CD8-positive, alpha-beta T cell (primary cell): ENCODE measurements at regions of chr2 and their contacts with region 1.

Region 1: DNA sequence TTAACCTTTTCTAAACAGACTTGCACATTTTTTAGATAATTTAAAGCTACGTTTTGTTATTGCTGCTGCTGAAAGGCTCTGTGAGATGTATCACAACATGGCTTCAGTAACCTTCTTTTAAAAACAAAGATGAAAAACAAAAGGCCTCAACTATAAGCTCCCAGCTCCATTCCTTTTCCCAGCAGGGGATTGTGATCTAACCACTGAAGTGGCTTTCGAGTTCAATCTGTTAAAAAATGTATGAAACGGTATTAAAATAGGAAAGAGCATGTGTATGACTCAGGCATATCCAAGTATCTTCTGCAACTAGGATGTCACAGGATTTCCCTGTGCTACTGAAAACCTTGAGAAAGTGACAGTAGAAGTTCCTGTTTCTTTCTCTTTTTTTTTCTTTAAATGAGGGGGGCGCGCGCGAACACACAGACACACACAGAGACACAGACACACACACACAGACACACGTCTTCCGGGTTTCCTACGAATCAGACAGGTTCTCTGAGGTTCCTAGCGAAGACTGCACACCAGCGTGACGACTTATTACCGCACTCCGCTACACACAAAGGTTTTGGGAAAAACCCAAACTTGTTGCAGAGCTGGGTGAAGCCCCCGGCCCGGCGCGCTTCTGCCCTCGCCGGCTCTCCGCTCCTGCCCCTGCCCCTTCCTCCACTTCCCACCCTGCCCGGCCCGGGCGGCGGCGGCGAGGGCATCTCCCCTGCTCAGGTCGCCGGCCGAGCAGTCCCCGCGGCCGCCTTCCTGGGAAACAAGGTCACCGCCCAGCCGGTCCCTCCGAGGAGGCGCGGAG is 86.8 kb downstream of the RBMS1 start:
- DNase-seq: peak; percentile 56 to 97 (median 74)
- ATAC-seq: peak; percentile 84
- H3K4me3 ChIP-seq: peak overlapping the region; percentile 52 to 70
- H3K4me3 Mint-ChIP-seq: peak overlapping the region; percentile 93
- H3K27ac ChIP-seq: peak overlapping the region; percentile 73
- H3K27ac Mint-ChIP-seq: peak overlapping the region; percentile 98
- H3K4me1 ChIP-seq: peaks cover 73% of the 10 kb centered on the region
- H3K4me1 Mint-ChIP-seq: peaks cover 82% of the 10 kb centered on the region
- H3K27me3 ChIP-seq: no peaks in the 10 kb centered on the region
- H3K27me3 Mint-ChIP-seq: no peaks in the 10 kb centered on the region
- CTCF ChIP-seq: no peak

Region 2: DNA sequence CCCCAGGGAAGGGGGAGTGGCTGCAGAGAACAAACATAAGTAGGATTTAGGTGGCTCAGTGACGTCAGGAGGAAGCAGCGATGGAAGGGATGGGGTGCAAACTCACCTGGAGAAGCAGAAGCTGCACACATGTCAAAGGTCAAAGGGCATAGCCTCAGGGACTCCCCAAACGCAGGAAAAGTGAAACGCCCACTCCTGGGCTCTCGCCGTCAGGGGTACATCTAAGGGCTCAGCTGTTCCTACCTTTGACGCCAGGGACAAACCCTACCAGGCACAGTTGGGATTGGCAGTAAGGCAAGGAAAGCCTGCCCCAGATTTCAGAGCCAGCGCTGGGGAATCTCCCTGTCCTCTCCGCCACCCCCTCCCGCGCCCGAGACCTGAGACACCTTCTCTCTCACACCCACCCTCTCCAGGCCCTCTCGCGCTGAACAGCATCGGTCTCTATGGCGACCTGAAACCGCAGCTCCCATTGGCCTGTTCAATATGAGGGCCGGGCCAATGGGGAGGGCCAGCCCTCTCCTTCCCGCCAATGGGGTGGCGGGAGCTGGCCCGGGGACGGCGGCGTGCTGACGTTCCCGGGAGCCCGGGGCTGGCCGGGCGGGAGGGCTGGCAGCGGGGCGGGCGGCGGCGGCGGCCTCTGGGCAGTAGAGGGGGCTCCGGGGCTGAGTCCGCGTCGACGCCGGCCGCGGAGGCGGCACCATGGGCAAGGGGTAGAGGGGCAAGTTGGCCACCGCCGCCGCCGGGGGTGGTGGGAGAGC is 1950.3 kb before region 1 on chr2 and contains the starts of genes CCDC148 and PKP4:
- CTCF ChIA-PET with region 1: no interaction called
- POLR2A ChIA-PET with region 1: no interaction called
- intact Hi-C with region 1: loop called in 1 of 2 experiments (anchors 5 kb)
- DNase-seq: peak; percentile 74 to 97 (median 86)
- ATAC-seq: peak; percentile 91
- H3K4me3 ChIP-seq: peak within 1 kb of the TSS; percentile 69 to 81
- H3K4me3 Mint-ChIP-seq: peak within 1 kb of the TSS; percentile 96
- H3K27ac ChIP-seq: peak within 1 kb of the TSS; percentile 23 to 49
- H3K27ac Mint-ChIP-seq: peak within 1 kb of the TSS; percentile 76
- H3K4me1 ChIP-seq: peaks cover 12% of the 10 kb centered on the region
- H3K4me1 Mint-ChIP-seq: peaks cover 16% of the 10 kb centered on the region
- H3K27me3 ChIP-seq: no peaks in the 10 kb centered on the region
- H3K27me3 Mint-ChIP-seq: peaks cover 13% of the 10 kb centered on the region
- CTCF ChIP-seq: no peak
- total RNA-seq, gene CCDC148: not detected
- total RNA-seq, gene PKP4: 5.7 to 8.1 TPM

Region 3: DNA sequence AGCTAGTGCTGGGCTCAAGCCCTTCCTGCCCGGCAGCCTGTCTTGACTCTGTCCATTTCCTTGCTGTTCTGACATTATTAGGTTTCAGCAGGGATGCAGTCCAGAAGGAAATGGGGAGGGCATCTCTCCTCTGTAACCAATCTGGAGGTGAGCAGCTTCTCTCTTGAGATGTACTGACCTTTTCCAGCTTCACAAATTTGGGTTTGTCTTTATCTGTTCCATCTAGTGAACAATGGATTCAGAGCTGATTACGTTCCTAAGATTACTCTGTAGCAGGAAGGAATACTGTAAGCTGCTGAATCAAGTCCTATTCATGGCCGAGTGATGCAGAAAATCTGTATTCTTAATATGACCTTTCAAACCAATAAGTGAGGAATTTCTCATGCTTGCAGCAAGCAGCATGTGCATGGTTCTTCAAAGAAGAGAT is 355.4 kb before region 1 on chr2:
- CTCF ChIA-PET with region 1: no interaction called
- POLR2A ChIA-PET with region 1: no interaction called
- intact Hi-C with region 1: no loop called
- DNase-seq: no peak
- ATAC-seq: no peak
- H3K4me3 ChIP-seq: no peak overlapping the region
- H3K4me3 Mint-ChIP-seq: no peak overlapping the region
- H3K27ac ChIP-seq: no peak overlapping the region
- H3K27ac Mint-ChIP-seq: no peak overlapping the region
- H3K4me1 ChIP-seq: no peaks in the 10 kb centered on the region
- H3K4me1 Mint-ChIP-seq: no peaks in the 10 kb centered on the region
- H3K27me3 ChIP-seq: no peaks in the 10 kb centered on the region
- H3K27me3 Mint-ChIP-seq: peaks cover 5% of the 10 kb centered on the region
- CTCF ChIP-seq: no peak

Region 4: GRCh38 chr2:160332318-160332717 is 74.5 kb before region 1 on chr2:
- CTCF ChIA-PET with region 1: no interaction called
- POLR2A ChIA-PET with region 1: no interaction called
- intact Hi-C with region 1: loop called in 1 of 2 experiments (anchors 5 kb)
- DNase-seq: peak in 3 of 9 experiments; percentile 13 to 55 (median 31)
- ATAC-seq: peak; percentile 42
- H3K4me3 ChIP-seq: no peak overlapping the region
- H3K4me3 Mint-ChIP-seq: peak overlapping the region; percentile 7
- H3K27ac ChIP-seq: no peak overlapping the region
- H3K27ac Mint-ChIP-seq: peak overlapping the region; percentile 77
- H3K4me1 ChIP-seq: peaks cover 74% of the 10 kb centered on the region
- H3K4me1 Mint-ChIP-seq: peaks cover 91% of the 10 kb centered on the region
- H3K27me3 ChIP-seq: no peaks in the 10 kb centered on the region
- H3K27me3 Mint-ChIP-seq: no peaks in the 10 kb centered on the region
- CTCF ChIP-seq: no peak

Region 5: DNA sequence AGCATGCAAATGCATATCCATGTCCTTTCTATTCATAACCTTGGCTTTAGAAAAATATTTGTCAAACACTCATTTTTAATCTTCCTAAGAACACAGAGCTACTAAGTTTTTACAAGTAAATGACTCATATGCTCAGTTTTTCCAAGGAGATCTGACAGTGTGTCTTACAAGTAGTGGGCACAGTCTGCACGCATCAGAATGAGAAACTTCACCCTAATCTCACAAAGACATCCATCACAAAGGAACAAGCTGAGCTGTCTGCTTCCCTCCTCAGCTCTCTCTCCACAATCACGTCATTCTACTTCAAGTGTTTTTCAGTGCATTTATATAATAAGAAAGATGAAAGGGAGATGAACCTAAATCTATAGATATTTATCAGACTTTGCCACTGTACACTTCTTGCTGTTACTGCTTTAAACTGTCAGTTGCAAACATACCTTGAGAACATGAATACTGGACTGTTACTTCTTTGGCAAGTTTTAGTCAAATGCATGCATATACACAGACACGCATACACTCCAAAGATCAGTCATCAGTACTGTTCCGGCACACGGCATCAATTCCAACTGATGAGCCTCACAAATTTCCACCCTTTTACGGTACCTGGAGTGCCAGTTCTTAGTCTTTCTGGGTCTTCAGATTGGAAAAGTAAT is 11.1 kb after region 1 on chr2:
- CTCF ChIA-PET with region 1: no interaction called
- POLR2A ChIA-PET with region 1: interaction called, 4 read pairs
- intact Hi-C with region 1: loop called (anchors 1 to 2 kb)
- DNase-seq: peak in 4 of 9 experiments; percentile 15 to 58 (median 36)
- ATAC-seq: peak; percentile 85
- H3K4me3 ChIP-seq: no peak overlapping the region
- H3K4me3 Mint-ChIP-seq: no peak overlapping the region
- H3K27ac ChIP-seq: no peak overlapping the region
- H3K27ac Mint-ChIP-seq: peak overlapping the region; percentile 24
- H3K4me1 ChIP-seq: peaks cover 26% of the 10 kb centered on the region
- H3K4me1 Mint-ChIP-seq: peaks cover 64% of the 10 kb centered on the region
- H3K27me3 ChIP-seq: no peaks in the 10 kb centered on the region
- H3K27me3 Mint-ChIP-seq: no peaks in the 10 kb centered on the region
- CTCF ChIP-seq: no peak

Region 6: DNA sequence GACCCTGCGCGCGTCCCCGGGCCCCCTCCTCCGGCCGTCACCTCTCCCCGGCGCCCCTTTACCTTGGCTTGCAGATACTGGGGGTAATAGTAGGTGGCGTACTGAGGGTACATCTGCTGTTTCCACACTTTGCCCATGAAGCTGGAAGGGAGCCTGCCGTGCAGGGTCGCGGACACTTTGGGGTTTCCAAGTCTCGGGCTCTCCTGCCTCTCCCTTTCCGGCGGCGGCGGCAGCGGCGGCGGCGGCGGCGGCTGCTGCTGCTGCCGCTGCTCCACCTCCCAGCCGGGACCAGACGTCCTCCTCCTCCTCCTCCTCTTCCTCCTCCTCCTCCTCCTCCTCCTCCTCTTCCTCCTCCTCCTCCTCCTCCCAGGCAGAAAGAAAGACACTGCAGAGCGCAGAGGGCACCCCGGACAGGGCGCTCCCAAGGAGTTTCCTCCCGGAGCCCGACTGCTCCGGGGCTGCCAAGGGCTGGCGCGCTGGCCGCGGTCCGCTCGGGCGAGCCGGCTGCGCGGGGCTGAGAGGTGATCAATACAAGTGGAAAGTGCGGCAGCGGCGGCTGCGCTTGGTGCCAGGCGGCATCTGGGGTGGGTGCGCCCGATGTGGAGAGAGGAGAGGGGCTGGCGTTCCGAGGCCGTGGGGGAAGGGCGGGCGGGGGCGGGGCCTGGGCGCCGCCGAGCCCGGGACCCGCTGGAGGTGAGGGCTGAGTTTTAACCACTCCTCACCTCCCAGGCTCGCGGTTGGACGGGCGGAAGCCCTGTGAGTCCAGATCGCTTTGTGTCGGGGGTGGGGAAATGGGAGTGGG is 86.6 kb after region 1 on chr2 and contains the start of gene RBMS1:
- CTCF ChIA-PET with region 1: no interaction called
- POLR2A ChIA-PET with region 1: interaction called, 7 read pairs
- intact Hi-C with region 1: loop called in 1 of 2 experiments (anchors 5 kb)
- DNase-seq: peak; percentile 8 to 70 (median 53)
- ATAC-seq: peak; percentile 41
- H3K4me3 ChIP-seq: peak within 1 kb of the TSS; percentile 62 to 80
- H3K4me3 Mint-ChIP-seq: peak within 1 kb of the TSS; percentile 95
- H3K27ac ChIP-seq: peak within 1 kb of the TSS; percentile 41 to 51
- H3K27ac Mint-ChIP-seq: peak within 1 kb of the TSS; percentile 93
- H3K4me1 ChIP-seq: peaks cover 35% of the 10 kb centered on the region
- H3K4me1 Mint-ChIP-seq: peaks cover 43% of the 10 kb centered on the region
- H3K27me3 ChIP-seq: no peaks in the 10 kb centered on the region
- H3K27me3 Mint-ChIP-seq: no peaks in the 10 kb centered on the region
- CTCF ChIP-seq: no peak
- total RNA-seq, gene RBMS1: 69.3 to 71.2 TPM

Region 7: GRCh38 chr2:161238560-161239325 is 832.0 kb after region 1 on chr2:
- CTCF ChIA-PET with region 1: no interaction called
- POLR2A ChIA-PET with region 1: no interaction called
- intact Hi-C with region 1: loop called in 1 of 2 experiments (anchors 10 kb)
- DNase-seq: peak; percentile 18 to 74 (median 68)
- ATAC-seq: peak; percentile 71
- H3K4me3 ChIP-seq: peak overlapping the region; percentile 56 to 64
- H3K4me3 Mint-ChIP-seq: peak overlapping the region; percentile 92
- H3K27ac ChIP-seq: no peak overlapping the region
- H3K27ac Mint-ChIP-seq: peak overlapping the region; percentile 78
- H3K4me1 ChIP-seq: peaks cover 16% of the 10 kb centered on the region
- H3K4me1 Mint-ChIP-seq: peaks cover 49% of the 10 kb centered on the region
- H3K27me3 ChIP-seq: peaks cover 0 to 4% of the 10 kb centered on the region in 2 experiments
- H3K27me3 Mint-ChIP-seq: peaks cover 2% of the 10 kb centered on the region
- CTCF ChIP-seq: no peak